ENCODE measurements at regions of chr22 and their contacts with region 1.

Region 1: GRCh38 chr22:46250035-46250782 is at the start of gene CDPF1:
- DNase-seq: peak; percentile 23 to 89
- H3K4me3 ChIP-seq: peak within 1 kb of the TSS; percentile 55 to 70 (median 62)
- H3K27ac ChIP-seq: no peak within 1 kb of the TSS
- H3K4me1 ChIP-seq: peaks cover 0 to 4% (median 2%) of the 10 kb centered on the region in 4 experiments; a peak in 4 of 7 replicates
- H3K27me3 ChIP-seq: peaks cover 0 to 4% (median 0%) of the 10 kb centered on the region in 4 experiments; a peak in 2 of 7 replicates
- CTCF ChIP-seq: peak in 1 of 3 experiments; percentile 2; a peak in 1 of 4 replicates
- EP300 ChIP-seq: no peak
- POLR2A ChIP-seq: no peak
- RAD21 ChIP-seq: no peak; a peak in 1 of 4 replicates
- total RNA-seq, gene CDPF1: 8.8 and 9.7 TPM in 2 replicates

Region 2: DNA sequence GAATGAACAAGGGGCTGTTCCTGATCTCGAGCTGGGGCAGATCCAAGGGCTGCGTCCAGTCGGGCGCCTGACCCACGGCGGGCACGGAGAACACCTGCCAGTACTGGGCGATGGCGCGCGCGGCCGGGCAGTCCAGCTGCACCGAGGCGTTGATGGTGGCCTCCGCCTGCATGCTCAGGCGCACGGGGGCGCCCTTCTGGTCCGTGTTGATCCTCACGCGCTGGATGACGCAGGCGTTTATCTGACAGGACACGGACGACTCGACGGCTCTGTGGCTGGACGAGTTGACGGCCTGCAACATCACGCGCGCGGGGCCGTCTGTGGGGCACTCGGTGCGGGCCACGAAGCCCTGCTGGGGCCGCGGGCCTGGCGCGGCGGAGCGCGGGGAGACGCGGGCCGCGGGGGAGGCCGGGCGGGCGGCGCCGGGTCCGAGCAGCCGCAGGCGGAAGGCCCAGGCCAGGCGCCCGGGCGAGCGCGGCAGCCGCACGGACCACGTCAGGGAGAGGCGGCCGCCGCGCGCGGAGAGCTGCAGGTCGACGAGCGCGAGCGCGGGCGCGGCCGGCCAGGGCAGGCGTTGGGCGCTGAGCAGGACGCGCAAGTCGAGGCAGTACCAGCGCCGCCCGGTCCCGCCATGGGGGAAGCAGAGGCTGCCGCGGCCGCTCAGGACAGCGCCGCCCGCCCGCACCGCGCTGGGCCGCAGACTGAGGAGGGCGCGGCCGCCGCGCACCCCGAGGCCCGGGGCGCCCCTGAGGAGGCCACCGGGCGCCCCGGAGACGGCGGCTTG is 12.4 kb after region 1 on chr22:
- CTCF ChIA-PET with region 1: interaction called, 8 read pairs
- POLR2A ChIA-PET with region 1: interaction called, 13 read pairs
- DNase-seq: peak; percentile 46 to 90
- H3K4me3 ChIP-seq: peak overlapping the region; percentile 18 to 52 (median 19); a peak in 6 of 8 replicates
- H3K27ac ChIP-seq: no peak overlapping the region
- H3K4me1 ChIP-seq: no peaks in the 10 kb centered on the region; a peak in 1 of 7 replicates
- H3K27me3 ChIP-seq: peaks cover 18 to 57% (median 35%) of the 10 kb centered on the region in 4 experiments
- CTCF ChIP-seq: peak; percentile 66 to 86 (median 83)
- EP300 ChIP-seq: no peak
- POLR2A ChIP-seq: no peak
- RAD21 ChIP-seq: peak in 1 of 2 experiments; percentile 47; a peak in 2 of 4 replicates

Measured in H1 (cell line).